ENCODE measurements at regions of chr5 and their contacts with region 1.

Region 1: DNA sequence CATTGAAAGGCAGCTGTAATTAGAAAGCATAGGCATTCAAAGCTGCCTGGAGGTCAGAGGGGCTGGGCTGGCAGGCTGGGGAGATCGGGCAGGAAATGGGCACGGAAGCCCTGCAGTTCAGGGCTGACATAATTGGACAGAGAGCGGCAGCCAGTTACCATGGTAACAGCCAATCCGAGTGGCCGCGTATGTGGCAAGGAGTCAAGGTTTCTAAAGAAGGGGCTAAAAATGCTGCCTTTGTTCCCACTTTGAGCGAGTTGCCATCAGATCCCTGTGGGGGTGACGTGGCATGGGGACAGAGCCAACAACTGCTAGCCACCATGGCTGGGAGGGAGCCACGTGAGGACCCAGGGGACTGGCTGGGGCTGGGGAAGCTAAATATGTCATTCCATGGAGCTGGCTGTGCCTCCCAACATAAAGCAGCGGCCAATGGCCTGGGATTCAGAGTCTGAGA is 44.7 kb upstream of the NDFIP1 start:
- DNase-seq: peak; percentile 95 to 98
- ATAC-seq: peak; percentile 92
- H3K4me3 ChIP-seq: no peak overlapping the region
- H3K27ac ChIP-seq: peak overlapping the region in 1 of 2 donors; percentile 24
- H3K4me1 ChIP-seq: peaks cover 0 to 3% of the 10 kb centered on the region in 2 donors
- H3K27me3 ChIP-seq: no peaks in the 10 kb centered on the region

Region 2: DNA sequence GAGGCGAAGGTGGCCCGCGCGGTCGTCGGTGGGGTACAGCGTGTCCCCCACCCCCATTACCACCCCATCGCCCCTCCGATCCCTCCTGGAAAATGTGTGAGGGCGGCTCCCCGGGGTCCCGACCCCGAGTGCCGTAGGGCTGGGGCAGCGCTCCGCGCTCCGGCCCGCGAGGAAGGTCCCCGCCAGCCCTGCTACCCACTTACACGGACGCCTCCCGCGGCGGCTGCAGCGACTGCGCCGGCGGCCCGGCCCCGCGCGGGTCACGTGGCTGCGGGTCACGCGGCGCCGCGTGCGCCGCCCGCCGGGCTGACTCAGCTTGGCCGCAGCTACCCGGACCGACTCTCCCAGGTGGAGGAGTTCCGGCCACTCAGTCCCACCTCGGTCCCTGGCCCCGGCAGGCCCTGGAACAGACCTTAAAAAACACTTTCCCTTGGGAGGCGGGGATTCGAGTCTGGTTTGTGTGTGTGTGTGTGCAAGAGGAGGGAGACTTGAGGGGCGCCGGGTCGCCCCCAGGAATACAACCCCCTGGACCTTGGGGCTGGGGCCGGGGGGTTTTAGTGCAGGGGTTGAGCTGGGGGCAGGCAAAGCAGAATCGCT is 51.0 kb before region 1 on chr5 and contains the start of gene GNPDA1:
- intact Hi-C with region 1: loop called (anchors 5 kb)
- DNase-seq: peak; percentile 89 to 93
- ATAC-seq: peak; percentile 93
- H3K4me3 ChIP-seq: peak within 1 kb of the TSS; percentile 63 to 83
- H3K27ac ChIP-seq: peak within 1 kb of the TSS in 1 of 2 donors; percentile 69
- H3K4me1 ChIP-seq: no peaks in the 10 kb centered on the region
- H3K27me3 ChIP-seq: no peaks in the 10 kb centered on the region
- total RNA-seq, gene GNPDA1: 18.7 to 21.5 TPM

Region 3: DNA sequence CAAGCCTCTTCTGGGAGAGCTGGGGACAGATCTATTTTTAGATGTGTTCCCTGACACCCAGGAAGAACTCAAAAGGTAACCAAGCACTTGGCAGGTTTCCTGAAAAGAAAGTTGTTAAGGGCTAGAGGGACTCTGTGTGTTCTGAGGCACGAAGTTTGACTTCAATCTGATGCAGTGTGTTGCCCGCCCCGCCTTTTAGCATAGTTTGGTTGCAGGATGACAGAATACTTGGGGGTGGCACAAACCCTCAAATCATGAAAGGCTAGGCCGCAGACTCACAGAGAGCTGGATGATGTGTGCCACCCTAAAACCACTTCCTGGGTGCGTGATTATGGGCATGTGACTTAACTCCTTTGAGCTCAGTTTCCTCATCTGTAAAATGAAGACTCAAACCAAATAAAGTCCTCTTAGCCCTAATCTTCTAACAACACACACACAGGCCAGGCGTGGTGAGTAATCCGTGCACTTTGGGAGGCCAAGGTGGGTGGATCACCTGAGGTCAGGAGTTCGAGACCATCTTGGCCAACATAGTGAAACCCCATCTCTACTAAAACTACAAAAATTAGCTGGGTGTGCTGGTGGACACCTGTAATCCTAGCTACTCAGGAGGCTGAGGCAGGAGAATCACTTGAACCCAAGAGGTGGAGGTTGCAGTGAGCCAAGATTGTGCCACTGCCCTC is 31.9 kb after region 1 on chr5:
- intact Hi-C with region 1: loop called (anchors 2 to 5 kb)
- DNase-seq: no peak
- ATAC-seq: peak; percentile 47
- H3K4me3 ChIP-seq: no peak overlapping the region
- H3K27ac ChIP-seq: peak overlapping the region in 1 of 2 donors; percentile 8
- H3K4me1 ChIP-seq: no peaks in the 10 kb centered on the region
- H3K27me3 ChIP-seq: no peaks in the 10 kb centered on the region

Region 4: DNA sequence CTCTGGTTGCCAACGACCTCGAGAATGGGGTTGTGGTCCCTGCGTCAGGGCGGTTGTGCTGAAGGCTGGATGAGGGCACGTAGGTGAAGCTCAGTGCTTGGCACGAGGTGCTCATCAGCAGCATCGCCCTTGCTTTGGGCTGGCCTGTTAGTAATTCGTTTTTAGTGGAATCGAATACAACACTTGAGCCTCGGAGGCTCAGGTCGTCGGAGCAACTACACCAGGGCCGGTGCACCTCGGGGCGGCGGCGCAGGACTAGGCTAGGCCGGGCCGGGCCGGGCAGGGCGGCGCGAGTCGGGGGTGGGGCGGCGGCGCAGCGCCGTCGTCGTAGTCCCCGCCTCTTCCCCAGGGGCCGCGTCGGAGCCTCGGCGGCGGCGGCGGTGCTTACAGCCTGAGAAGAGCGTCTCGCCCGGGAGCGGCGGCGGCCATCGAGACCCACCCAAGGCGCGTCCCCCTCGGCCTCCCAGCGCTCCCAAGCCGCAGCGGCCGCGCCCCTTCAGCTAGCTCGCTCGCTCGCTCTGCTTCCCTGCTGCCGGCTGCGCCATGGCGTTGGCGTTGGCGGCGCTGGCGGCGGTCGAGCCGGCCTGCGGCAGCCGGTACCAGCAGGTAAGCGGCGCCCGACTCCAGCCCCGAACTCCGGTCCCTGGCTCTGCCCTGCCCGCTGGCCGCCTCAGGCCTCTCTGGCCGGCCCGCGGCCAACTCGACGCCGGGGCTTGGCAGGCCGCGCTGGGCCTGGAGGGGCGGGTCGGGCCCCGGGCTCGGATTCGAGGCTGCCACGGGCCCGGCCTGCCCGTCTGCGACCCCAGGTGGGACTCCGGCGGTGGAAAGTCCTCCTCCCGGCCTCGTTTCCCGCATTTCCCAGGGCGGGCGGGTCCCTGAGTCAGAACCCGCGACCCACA is 44.8 kb after region 1 on chr5 and contains the start of gene NDFIP1:
- intact Hi-C with region 1: loop called in 1 of 2 experiments (anchors 2 kb)
- DNase-seq: peak; percentile 92 to 95
- ATAC-seq: peak; percentile 94
- H3K4me3 ChIP-seq: peak within 1 kb of the TSS; percentile 91 to 99
- H3K27ac ChIP-seq: peak within 1 kb of the TSS; percentile 96 to 97
- H3K4me1 ChIP-seq: peaks cover 0 to 9% of the 10 kb centered on the region in 2 donors
- H3K27me3 ChIP-seq: no peaks in the 10 kb centered on the region
- total RNA-seq, gene NDFIP1: 93.7 to 120 TPM

Measured in aorta (tissue), 5 donors.